ENCODE measurements at regions of chr12 and their contacts with region 1.

Region 1: DNA sequence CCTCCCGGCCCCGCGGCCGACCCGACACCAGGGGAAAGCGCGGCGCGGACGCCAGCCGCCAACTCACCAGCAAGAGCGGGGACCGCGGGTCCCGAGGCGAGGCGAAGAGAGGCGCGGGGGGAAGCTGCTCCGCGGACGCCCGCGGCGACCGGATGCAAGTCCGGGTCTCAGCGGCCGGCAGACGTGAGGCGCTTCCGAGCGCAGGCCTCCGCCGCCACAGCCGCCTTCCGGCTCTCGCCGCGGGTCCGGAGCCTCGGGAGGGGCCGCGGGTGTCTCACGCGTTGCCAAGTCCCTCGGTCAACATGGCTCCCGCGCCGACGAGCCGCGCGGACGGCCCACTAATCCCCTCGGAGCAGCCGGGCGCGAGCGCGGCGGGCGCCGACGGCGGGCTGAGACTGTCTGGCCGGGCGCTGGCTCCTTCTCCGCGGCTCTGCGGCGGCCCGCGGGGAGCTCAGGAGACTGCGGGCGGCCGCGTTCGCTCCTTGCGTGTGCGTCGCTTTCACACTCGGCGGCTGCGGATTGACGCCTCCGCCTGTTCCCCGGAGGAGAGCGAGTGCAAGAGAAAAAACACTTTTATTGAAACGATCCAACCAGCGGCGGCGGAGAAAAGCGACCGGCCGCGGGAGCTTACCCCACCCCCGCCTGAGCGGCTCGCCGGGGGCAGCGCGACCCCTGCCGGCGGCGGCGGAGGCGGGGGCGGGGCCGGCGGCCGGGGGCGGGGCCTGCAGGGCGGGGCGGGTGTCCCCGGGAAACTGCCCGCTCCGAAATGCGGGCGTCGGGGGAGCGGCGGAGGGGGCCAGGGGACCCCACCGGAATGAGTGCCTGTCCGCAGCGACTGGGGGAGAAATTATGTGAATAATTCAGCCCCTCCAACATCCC is at the start of gene CDK17:
- DNase-seq: peak; percentile 89 to 94 (median 93)
- ATAC-seq: peak; percentile 67
- H3K4me3 ChIP-seq: peak within 1 kb of the TSS; percentile 90
- H3K27ac ChIP-seq: peak within 1 kb of the TSS; percentile 96
- H3K4me1 ChIP-seq: peaks cover 10% of the 10 kb centered on the region in 2 experiments; a peak in 3 of 5 replicates
- H3K27me3 ChIP-seq: no peaks in the 10 kb centered on the region
- CTCF ChIP-seq: peak; percentile 25 to 75 (median 58); a peak in 4 of 6 replicates
- EP300 ChIP-seq: no peak
- POLR2A ChIP-seq: peak; percentile 76
- RAD21 ChIP-seq: peak; percentile 50 to 51
- polyA plus RNA-seq, gene CDK17: 4.8 to 5.4 TPM

Region 2: DNA sequence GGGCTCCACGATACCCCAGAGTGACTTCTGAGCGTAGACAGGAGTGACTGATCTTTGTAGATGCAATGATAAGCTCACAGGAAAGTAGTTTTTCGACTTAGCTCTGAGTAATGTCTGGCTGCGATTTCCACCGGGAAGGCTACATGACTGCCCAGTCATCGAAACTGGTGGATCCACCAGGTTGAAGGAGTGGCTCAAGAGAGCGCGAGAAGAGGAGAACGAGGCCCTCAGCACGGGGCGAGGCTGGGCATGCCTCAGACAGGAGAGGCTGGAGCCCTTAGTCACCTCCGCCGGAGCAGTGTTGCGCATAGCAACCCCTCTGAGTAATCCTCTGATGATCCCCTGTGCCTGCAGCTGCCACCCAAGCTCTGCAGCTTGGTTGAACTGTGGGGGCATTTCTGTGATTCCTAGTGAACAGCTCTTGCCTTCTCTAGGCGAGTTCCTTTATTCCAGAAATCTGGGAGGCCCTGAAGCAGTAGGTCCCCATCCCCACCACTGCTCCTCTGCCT is 180.4 kb before region 1 on chr12:
- CTCF ChIA-PET with region 1: no interaction called
- POLR2A ChIA-PET with region 1: no interaction called
- in situ Hi-C with region 1: no loop called
- intact Hi-C with region 1: loop called (anchors 5 kb)
- DNase-seq: no peak
- ATAC-seq: no peak; the same call in 1 of the 3 replicates
- H3K4me3 ChIP-seq: no peak overlapping the region
- H3K27ac ChIP-seq: no peak overlapping the region
- H3K4me1 ChIP-seq: no peaks in the 10 kb centered on the region
- H3K27me3 ChIP-seq: 0 out of 5 replicates have a peak, but pooled peaks cover 0 to 3% of the 10 kb centered on the region in 2 experiments
- CTCF ChIP-seq: no peak
- EP300 ChIP-seq: no peak
- POLR2A ChIP-seq: no peak
- RAD21 ChIP-seq: no peak

Region 3: DNA sequence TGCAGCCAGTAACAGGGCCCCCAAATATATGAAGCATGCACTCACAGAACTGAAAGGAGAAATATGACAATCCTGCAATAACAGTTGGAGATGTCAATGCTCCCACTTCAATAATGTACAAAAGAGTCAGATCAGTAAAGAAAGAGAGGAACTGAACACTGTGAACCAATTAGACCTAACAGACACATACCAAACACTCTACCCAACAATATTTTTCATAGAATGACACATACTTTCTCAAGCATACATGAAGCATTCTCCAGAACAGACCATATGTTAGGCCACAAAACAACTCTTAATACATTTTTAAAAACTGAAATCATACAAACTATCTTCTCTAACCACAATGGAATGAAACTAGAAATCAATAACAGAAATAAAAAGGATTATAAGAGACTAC is 125.8 kb before region 1 on chr12:
- CTCF ChIA-PET with region 1: no interaction called
- POLR2A ChIA-PET with region 1: no interaction called
- in situ Hi-C with region 1: no loop called
- intact Hi-C with region 1: no loop called
- DNase-seq: no peak
- ATAC-seq: no peak
- H3K4me3 ChIP-seq: no peak overlapping the region
- H3K27ac ChIP-seq: no peak overlapping the region
- H3K4me1 ChIP-seq: no peaks in the 10 kb centered on the region
- H3K27me3 ChIP-seq: no peaks in the 10 kb centered on the region
- CTCF ChIP-seq: no peak
- EP300 ChIP-seq: no peak
- POLR2A ChIP-seq: no peak
- RAD21 ChIP-seq: no peak

Region 4: DNA sequence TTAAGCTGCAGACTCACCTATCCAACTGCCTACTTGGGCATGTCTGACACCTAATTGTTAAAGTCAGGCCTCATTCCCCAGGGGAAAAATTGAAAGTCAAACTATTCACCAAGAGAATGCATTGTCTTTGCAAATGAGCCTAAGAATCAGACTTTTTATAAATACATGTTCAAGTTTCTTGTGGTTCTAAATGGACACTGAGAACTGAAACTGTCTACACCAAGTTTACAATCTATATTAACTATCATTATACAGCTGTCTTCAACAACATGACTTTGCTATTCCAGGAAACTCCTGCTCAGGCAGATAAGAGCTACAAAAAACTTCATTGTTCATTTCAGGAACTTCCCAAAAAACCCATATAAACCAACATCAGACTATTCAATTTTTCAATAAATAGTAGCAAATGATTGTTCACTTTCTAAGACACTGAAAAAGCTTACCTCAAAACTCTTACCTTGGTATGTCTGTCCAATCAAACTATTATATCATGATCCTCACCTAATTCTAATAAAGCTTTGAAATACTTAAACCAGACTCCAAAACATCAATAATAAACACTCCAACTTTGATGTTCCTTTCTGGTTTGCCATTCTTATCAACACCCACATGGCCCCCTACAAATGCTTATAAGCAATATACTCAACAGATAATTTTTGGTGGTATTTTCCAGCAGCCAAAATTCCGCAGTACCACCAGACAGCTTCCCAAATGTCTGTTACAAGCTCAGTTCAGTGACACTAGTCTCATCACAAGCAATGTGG is 24.1 kb before region 1 on chr12:
- CTCF ChIA-PET with region 1: no interaction called
- POLR2A ChIA-PET with region 1: interaction called, 20 read pairs
- in situ Hi-C with region 1: no loop called
- intact Hi-C with region 1: loop called (anchors 2 kb)
- DNase-seq: peak in 3 of 4 experiments; percentile 20 to 65 (median 52)
- ATAC-seq: peak; percentile 61
- H3K4me3 ChIP-seq: no peak overlapping the region; the same call in 1 of the 2 replicates
- H3K27ac ChIP-seq: peak overlapping the region; percentile 82
- H3K4me1 ChIP-seq: peaks cover 13 to 53% of the 10 kb centered on the region in 2 experiments
- H3K27me3 ChIP-seq: no peaks in the 10 kb centered on the region
- CTCF ChIP-seq: no peak
- EP300 ChIP-seq: peak; percentile 96
- POLR2A ChIP-seq: no peak
- RAD21 ChIP-seq: no peak

Region 5: DNA sequence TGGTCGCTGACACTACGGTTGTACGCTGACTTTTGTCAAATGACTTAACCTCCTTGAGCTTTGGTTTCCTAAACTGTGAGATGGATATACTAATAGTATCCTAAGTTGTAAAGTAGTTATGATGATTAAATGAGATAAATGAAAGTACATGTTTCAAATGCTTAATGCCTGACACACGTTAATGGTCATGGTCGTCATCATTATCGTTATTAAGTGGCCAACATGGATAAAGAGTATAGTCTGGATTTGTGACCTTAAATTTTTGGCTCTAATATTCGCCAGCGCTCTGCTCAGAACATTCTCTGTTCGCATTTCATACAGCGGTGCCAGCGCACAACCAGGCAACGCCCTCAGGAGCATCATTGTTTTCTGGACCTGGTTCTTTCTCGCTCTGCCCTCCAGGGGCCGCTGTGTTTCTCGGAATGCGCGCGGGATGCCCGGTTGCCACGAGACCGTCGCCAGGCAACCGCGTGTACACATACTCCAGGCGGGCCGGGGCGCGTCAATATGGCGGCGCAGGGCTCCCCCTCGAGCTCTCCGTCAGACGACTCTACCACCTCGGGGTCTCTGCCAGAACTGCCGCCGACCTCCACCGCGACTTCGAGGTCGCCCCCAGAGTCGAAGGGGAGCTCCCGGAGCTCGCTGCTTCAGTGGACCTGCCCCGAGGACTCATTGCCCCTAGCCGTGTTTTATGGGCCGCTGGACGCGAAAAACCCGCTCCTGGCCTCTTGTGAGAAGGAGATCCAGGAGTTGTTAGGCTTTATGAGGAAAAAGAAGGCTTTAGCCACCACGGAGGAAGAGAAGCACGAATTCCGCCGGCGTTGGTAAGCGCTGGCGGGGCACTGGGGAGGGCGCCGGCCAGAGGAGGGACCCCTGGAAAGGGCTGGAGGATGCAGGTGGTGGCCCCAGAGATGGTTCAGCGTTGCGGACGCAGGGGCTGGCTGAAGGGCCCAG is 89.2 kb after region 1 on chr12 and contains the start of gene CFAP54:
- CTCF ChIA-PET with region 1: no interaction called
- POLR2A ChIA-PET with region 1: interaction called, 3 read pairs
- in situ Hi-C with region 1: no loop called
- intact Hi-C with region 1: loop called (anchors 5 kb)
- DNase-seq: peak; percentile 88 to 94 (median 93)
- ATAC-seq: peak; percentile 99
- H3K4me3 ChIP-seq: peak within 1 kb of the TSS; percentile 61
- H3K27ac ChIP-seq: no peak within 1 kb of the TSS
- H3K4me1 ChIP-seq: peaks cover 3 to 8% of the 10 kb centered on the region in 2 experiments; a peak in 3 of 5 replicates
- H3K27me3 ChIP-seq: peaks cover 0 to 2% of the 10 kb centered on the region in 2 experiments; a peak in 2 of 5 replicates
- CTCF ChIP-seq: peak; percentile 89 to 94 (median 92)
- EP300 ChIP-seq: no peak
- POLR2A ChIP-seq: no peak
- RAD21 ChIP-seq: peak; percentile 53 to 66
- polyA plus RNA-seq, gene CFAP54: 0.03 to 0.08 TPM

Region 6: DNA sequence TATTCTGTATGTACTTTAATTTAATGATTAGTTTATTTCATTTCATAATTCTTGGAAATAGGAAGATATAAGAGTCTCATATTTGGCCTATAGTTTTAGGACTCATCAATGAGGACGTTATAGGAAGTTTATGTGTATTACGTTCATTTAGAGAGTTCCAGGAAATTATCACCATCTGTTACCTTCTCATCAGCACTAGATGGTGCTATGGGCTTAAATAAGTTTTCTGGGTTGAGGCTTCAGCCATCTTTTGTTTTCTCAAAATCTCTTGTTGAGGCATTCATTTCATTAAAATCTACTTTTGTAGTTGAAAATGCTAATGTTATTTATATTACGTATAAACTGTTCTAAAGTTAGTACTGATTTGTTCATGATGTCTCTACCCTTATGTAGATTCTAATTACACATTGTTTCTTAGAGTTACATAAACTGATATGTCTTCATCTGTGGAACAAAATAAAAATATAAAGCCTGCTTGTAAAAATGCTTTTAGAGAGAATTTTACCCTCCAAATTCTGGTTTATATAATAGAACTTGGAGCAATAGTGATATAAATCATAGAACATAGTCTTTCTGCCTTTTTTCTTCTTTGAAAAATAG is 178.5 kb after region 1 on chr12:
- CTCF ChIA-PET with region 1: no interaction called
- POLR2A ChIA-PET with region 1: no interaction called
- in situ Hi-C with region 1: no loop called
- intact Hi-C with region 1: no loop called
- DNase-seq: peak; percentile 10 to 59 (median 24)
- ATAC-seq: peak; percentile 85
- H3K4me3 ChIP-seq: no peak overlapping the region
- H3K27ac ChIP-seq: no peak overlapping the region
- H3K4me1 ChIP-seq: no peaks in the 10 kb centered on the region
- H3K27me3 ChIP-seq: no peaks in the 10 kb centered on the region
- CTCF ChIP-seq: peak; percentile 47 to 81 (median 50); a peak in 4 of 6 replicates
- EP300 ChIP-seq: no peak
- POLR2A ChIP-seq: no peak
- RAD21 ChIP-seq: peak; percentile 80 to 87